ENCODE measurements at regions of chr3 and their contacts with region 1.

Region 1: DNA sequence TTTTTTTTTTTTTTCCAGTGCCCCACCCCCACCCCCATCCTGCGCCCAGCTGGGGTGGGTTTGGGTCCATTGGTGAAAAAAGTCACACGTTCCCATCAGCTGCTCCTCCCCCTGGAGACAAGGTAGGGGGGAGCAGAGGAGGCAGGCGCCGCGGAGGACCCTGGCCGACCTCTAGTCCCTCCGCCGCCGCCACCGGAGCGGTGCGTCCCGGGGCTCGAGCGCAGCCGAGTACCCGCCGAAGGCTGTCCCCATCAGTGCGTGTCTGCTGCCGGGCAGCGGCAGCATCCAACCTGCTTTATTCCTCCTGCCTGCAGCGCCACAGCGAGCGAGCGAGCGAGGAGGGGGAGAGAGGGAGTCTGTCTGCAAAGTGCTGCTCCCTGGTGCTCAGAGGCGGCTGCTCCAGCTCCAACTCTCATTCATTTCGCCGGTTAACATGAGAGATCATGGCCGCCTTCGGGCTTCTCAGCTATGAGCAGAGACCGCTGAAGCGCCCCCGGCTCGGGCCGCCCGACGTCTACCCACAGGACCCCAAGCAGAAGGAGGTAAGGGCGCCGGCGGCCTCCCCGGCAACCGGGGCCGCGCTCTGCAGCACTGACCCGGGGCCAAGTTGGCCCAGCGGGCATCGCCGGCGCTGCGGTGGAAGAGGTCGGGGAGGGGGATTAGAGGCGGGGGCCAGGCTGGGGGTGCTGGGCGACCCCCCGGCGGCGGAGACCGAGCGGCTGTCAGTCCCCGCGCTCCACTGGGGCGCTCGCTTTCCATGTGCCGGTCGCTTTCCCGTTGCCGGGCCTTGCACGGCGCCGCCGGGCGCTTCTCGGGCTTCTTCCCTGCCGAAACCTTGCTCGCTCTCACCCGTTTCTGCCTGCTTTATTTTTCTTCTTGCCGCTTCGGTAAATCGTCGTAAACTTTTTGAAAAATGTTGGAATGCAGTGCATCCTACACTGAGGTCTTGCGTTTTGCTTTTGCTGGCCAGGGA is 1.3 kb downstream of the MED12L start:
- DNase-seq: peak; percentile 51 to 78 (median 61)
- H3K4me3 ChIP-seq: peak overlapping the region in 1 of 2 donors; percentile 41
- H3K4me3 Mint-ChIP-seq: peak overlapping the region; percentile 86 to 91 (median 89)
- H3K27ac ChIP-seq: no peak overlapping the region
- H3K27ac Mint-ChIP-seq: peak overlapping the region in 2 of 7 donors; percentile 78 to 79
- H3K4me1 ChIP-seq: peaks cover 6% of the 10 kb centered on the region
- H3K4me1 Mint-ChIP-seq: peaks cover 5 to 18% (median 12%) of the 10 kb centered on the region in 4 donors
- H3K27me3 ChIP-seq: peaks cover 17% of the 10 kb centered on the region
- H3K27me3 Mint-ChIP-seq: peaks cover 32% of the 10 kb centered on the region in 2 donors

Region 2: DNA sequence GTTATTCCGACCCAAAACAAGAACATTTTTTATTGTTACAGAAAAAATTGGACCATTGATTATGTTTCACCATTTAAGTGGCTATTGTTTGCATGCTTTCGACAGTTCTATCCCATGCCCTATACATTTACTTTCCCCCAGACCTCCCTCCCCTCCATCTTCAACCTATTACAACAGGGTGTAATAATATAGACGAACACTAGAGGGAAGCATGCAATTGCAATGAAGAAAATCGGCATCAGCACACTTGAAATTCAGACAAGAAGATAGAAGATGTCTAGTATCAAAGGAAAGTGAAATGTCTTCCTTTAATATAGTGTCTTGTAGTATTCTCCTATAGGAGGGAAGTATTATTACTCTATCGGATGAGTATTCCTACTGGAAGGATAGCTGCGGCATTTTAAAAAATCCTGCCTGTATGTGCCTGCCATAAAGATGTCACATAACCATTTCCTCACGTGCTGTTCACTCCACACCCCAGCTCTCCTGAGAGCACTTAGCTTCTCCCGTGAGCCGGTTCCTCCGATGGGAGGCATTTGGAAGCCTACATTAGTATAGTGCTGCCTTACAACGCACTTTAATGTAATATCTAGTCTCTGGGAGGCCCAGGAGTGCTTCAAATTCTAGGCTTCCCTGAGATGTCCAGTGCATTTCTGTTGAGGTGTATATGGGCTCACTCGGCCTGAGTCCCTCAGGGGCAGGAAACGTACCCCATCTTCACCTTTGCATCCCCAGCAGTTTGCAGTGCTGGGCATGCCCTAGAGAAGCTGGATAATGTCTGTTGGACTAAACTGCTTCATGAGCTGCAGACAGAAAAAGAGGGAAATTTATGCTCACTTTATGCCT is 365.3 kb before region 1 on chr3:
- CTCF ChIA-PET with region 1: interaction called, 8 read pairs
- POLR2A ChIA-PET with region 1: no interaction called
- intact Hi-C with region 1: loop called (anchors 2 kb)
- DNase-seq: peak in 4 of 5 donors; percentile 67 to 75 (median 68)
- H3K4me3 ChIP-seq: no peak overlapping the region
- H3K4me3 Mint-ChIP-seq: peak overlapping the region in 1 of 8 donors; percentile 48
- H3K27ac ChIP-seq: no peak overlapping the region
- H3K27ac Mint-ChIP-seq: peak overlapping the region in 2 of 7 donors; percentile 11 to 53
- H3K4me1 ChIP-seq: peaks cover 12% of the 10 kb centered on the region
- H3K4me1 Mint-ChIP-seq: peaks cover 6 to 11% (median 8%) of the 10 kb centered on the region in 4 donors
- H3K27me3 ChIP-seq: no peaks in the 10 kb centered on the region
- H3K27me3 Mint-ChIP-seq: no peaks in the 10 kb centered on the region

Region 3: DNA sequence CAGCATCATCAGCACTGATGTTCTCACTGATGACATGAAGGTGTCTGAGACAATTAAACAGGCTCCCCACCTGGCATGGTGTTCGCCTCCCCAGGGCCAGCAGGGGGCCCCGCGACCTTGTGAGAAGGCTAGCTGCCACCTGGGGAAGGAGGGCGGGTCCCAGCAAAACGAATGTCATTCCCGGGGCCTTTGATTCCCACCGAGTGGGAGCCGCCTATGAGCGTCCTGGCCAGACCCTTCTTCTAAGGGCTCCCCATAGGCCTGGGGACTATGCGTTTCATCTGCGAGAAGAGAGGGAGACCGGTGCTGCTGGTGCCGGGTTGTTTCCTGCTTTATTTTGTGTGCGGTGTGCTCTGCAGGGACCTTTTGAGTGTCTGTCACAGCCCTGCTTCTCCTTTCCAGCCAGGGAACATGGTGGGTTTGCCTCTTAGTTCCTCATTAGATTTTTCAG is 161.0 kb before region 1 on chr3:
- CTCF ChIA-PET with region 1: no interaction called
- POLR2A ChIA-PET with region 1: no interaction called
- intact Hi-C with region 1: loop called (anchors 5 kb)
- DNase-seq: peak in 4 of 5 donors; percentile 28 to 37 (median 31)
- H3K4me3 ChIP-seq: no peak overlapping the region
- H3K4me3 Mint-ChIP-seq: peak overlapping the region in 7 of 8 donors; percentile 48 to 68 (median 59)
- H3K27ac ChIP-seq: no peak overlapping the region
- H3K27ac Mint-ChIP-seq: no peak overlapping the region
- H3K4me1 ChIP-seq: peaks cover 3% of the 10 kb centered on the region
- H3K4me1 Mint-ChIP-seq: peaks cover 3 to 8% (median 6%) of the 10 kb centered on the region in 4 donors
- H3K27me3 ChIP-seq: peaks cover 8% of the 10 kb centered on the region
- H3K27me3 Mint-ChIP-seq: peaks cover 8 to 13% of the 10 kb centered on the region in 2 donors